ENCODE measurements at regions of chr1 and their contacts with region 1.

Region 1: DNA sequence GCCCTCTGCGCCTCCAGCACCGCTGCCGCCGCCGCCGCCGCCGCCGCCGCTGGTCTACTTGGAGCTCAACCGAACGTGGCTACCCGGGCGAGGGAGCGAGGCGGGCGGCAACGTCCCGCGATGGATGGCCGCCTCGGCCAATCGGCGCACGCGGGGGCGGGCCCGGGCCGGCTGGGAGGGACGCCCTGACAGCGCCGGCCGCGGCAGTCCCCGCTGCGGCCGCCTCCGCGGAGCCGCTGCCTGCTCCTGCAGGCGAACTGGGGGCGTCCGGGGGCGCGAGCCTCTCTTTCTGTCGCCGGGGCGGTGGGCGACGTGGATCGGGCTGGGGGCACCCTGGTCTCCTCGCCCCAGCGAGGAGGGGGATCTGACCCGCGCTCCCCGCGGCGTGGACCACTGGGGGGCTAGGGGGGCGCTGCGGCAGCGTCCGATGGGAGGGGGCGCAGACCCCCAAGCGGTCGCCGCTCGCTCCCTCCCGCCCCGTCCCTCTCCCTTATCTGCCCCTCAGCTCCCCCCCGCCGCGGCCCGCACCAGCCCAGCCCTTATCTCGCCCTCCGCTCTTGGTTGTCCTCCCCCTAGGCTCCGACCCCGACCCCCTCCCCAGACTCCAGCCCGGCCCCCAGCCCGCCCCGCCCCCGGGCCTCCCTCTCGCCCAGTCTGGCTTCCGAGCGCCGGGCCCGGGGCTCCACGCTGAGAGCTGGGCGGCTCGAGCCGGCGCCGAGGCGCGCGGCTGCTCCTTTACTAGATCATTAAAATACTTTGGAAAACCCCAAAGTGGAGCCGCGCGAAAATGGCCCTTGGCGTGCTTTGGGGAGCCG is at the start of gene SSBP3:
- DNase-seq: peak; percentile 95
- ATAC-seq: peak; percentile 93
- H3K4me3 Mint-ChIP-seq: peak within 1 kb of the TSS; percentile 91
- H3K27ac Mint-ChIP-seq: peak within 1 kb of the TSS; percentile 89
- H3K4me1 Mint-ChIP-seq: peaks cover 49% of the 10 kb centered on the region
- H3K27me3 Mint-ChIP-seq: no peaks in the 10 kb centered on the region
- CTCF ChIP-seq: no peak
- total RNA-seq, gene SSBP3: 23.1 and 29.7 TPM in 2 replicates

Region 2: GRCh38 chr1:53945433-53946251 is 460.9 kb before region 1 on chr1 and contains the start of gene IFT25:
- CTCF ChIA-PET with region 1: no interaction called
- POLR2A ChIA-PET with region 1: interaction called, 14 read pairs
- intact Hi-C with region 1: loop called (anchors 2 kb)
- DNase-seq: peak; percentile 100
- ATAC-seq: peak; percentile 81
- H3K4me3 Mint-ChIP-seq: peak within 1 kb of the TSS; percentile 98
- H3K27ac Mint-ChIP-seq: peak within 1 kb of the TSS; percentile 92
- H3K4me1 Mint-ChIP-seq: peaks cover 37% of the 10 kb centered on the region
- H3K27me3 Mint-ChIP-seq: no peaks in the 10 kb centered on the region
- CTCF ChIP-seq: no peak
- total RNA-seq, gene IFT25: 38.0 and 41.0 TPM in 2 replicates

Region 3: DNA sequence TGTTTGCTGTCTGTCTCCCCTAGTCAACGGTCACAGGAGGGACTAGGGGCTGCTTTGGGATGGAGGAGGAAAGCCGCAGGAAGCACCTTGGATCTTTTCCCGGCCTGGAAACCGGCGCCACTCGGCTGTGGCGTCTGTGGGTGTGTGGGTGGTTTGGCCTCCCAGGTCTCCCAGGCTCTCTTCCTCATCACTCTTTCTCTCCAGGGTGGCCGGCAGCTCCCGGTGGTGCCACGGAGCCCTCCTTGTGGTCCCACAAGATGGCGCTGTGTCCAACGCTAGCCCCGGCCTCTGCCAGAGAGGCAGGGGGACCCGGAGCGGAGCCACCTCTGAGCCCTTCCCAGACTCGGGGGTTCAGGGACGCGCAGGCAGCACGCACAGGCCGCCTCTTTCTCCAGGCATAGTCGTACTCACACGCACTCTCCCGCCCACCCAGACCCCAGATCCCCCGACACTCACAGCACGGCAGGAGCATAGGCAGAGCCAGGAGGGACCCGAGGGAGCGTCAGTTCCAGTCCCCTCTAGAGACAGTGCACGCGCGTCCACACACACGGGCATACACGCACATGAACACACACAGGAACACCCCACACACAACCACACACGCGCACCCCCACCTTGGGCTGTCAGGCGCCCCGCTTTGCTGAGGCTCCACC is 284.9 kb before region 1 on chr1:
- CTCF ChIA-PET with region 1: no interaction called
- POLR2A ChIA-PET with region 1: no interaction called
- intact Hi-C with region 1: loop called (anchors 5 kb)
- DNase-seq: peak; percentile 37
- ATAC-seq: peak; percentile 42
- H3K4me3 Mint-ChIP-seq: no peak overlapping the region
- H3K27ac Mint-ChIP-seq: no peak overlapping the region
- H3K4me1 Mint-ChIP-seq: peaks cover 5% of the 10 kb centered on the region
- H3K27me3 Mint-ChIP-seq: peaks cover 5% of the 10 kb centered on the region
- CTCF ChIP-seq: no peak

Region 4: DNA sequence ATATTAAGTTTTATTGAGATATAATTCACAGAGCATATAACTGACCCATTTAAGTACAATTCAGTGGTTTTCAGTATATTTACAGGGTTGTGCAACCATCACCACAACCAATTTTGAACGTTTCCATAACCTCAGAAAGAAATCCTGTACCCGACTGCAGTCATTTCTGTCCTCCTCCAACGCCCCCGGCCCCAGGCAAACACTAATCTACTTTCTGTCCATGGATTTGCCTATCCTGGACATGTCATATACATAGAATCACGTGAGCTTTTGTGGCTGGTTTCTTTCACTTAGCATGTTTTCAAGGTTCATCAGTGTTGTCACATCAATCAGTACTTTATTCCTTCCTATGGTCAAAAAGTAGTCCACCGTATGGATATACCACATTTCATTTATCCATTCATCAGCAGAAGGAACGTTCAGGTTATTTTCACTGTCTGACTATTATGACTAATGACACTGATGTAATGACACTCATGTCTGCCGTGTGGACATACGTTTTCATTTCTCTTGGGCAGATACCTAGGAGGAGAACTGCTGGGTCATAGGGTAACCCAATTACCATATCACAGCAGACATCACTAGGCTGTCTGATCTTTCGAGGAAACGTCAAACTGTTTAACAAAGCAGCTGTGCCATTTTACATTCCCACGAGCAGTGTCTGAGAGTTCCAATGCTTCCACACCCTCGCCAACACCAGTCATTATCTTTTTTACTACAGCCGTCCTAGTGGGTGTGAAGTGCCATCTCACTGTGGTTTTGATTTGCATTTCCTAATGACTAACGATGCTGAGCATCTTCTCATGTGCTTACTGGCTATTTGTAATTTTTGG is 175.8 kb before region 1 on chr1:
- CTCF ChIA-PET with region 1: no interaction called
- POLR2A ChIA-PET with region 1: no interaction called
- intact Hi-C with region 1: no loop called
- DNase-seq: no peak
- ATAC-seq: no peak
- H3K4me3 Mint-ChIP-seq: no peak overlapping the region
- H3K27ac Mint-ChIP-seq: no peak overlapping the region
- H3K4me1 Mint-ChIP-seq: no peaks in the 10 kb centered on the region
- H3K27me3 Mint-ChIP-seq: no peaks in the 10 kb centered on the region
- CTCF ChIP-seq: no peak

Region 5: GRCh38 chr1:54355931-54356679 is 50.4 kb before region 1 on chr1:
- CTCF ChIA-PET with region 1: interaction called, 4 read pairs
- POLR2A ChIA-PET with region 1: interaction called, 5 read pairs
- intact Hi-C with region 1: loop called (anchors 1 kb)
- DNase-seq: no peak
- ATAC-seq: peak; percentile 65
- H3K4me3 Mint-ChIP-seq: peak overlapping the region; percentile 84
- H3K27ac Mint-ChIP-seq: peak overlapping the region; percentile 50
- H3K4me1 Mint-ChIP-seq: peaks cover 22% of the 10 kb centered on the region
- H3K27me3 Mint-ChIP-seq: peaks cover 1% of the 10 kb centered on the region
- CTCF ChIP-seq: no peak

Region 6: DNA sequence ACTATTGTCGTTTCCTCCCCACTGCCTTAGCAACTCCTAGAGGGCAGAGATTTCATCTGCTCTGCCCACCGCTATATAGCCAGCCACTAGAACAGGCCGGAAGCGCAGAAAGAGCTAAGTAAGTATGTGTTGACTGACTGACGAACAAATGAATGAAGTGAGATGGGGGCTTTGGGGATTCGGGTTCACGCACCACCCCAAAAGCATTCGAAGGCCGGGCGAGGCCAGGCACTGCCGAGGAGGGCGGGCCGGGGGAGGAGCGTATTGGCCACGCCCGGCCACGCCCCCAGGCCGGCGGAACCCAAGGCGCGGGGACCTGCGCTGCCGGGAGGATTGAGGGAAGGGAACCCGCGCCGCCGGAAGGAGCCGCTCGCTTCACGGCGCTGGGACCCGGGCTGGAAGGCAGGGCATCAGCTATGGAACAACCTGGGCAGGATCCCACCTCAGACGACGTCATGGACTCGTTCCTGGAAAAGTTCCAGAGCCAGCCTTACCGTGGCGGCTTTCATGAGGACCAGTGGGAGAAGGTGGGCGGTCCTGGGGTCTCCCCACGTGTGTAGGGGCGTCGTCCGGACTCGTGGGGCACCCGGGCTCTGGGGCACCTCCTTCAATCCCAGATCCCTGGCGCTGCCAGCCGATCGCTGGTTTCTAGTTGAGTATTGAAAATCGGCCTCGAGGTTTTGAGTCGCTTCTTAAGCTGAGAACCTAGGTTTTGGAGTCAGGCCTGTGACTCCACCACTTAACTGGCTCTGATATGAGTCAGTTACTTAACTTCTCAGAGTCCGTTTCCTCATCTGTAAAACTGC is 309.1 kb after region 1 on chr1 and contains the start of gene TTC4:
- CTCF ChIA-PET with region 1: no interaction called
- POLR2A ChIA-PET with region 1: interaction called, 3 read pairs
- intact Hi-C with region 1: loop called (anchors 5 kb)
- DNase-seq: peak; percentile 88
- ATAC-seq: peak; percentile 98
- H3K4me3 Mint-ChIP-seq: peak within 1 kb of the TSS; percentile 94
- H3K27ac Mint-ChIP-seq: peak within 1 kb of the TSS; percentile 83
- H3K4me1 Mint-ChIP-seq: peaks cover 30% of the 10 kb centered on the region
- H3K27me3 Mint-ChIP-seq: no peaks in the 10 kb centered on the region
- CTCF ChIP-seq: no peak
- total RNA-seq, gene TTC4: 30.8 and 31.5 TPM in 2 replicates

Measured in activated B cell treated with CpG ODN at 0.5 μM for 24 hours (primary cell).